ENCODE measurements at regions of chr22 and their contacts with region 1.

Region 1: GRCh38 chr22:38485783-38486182 is 17.9 kb downstream of the KDELR3 start:
- DNase-seq: no peak
- H3K4me3 ChIP-seq: no peak overlapping the region
- CTCF ChIP-seq: no peak

Region 2: GRCh38 chr22:38540701-38541100 is 54.9 kb after region 1 on chr22:
- CTCF ChIA-PET with region 1: no interaction called
- POLR2A ChIA-PET with region 1: no interaction called
- DNase-seq: no peak
- H3K4me3 ChIP-seq: no peak overlapping the region
- CTCF ChIP-seq: no peak

Region 3: DNA sequence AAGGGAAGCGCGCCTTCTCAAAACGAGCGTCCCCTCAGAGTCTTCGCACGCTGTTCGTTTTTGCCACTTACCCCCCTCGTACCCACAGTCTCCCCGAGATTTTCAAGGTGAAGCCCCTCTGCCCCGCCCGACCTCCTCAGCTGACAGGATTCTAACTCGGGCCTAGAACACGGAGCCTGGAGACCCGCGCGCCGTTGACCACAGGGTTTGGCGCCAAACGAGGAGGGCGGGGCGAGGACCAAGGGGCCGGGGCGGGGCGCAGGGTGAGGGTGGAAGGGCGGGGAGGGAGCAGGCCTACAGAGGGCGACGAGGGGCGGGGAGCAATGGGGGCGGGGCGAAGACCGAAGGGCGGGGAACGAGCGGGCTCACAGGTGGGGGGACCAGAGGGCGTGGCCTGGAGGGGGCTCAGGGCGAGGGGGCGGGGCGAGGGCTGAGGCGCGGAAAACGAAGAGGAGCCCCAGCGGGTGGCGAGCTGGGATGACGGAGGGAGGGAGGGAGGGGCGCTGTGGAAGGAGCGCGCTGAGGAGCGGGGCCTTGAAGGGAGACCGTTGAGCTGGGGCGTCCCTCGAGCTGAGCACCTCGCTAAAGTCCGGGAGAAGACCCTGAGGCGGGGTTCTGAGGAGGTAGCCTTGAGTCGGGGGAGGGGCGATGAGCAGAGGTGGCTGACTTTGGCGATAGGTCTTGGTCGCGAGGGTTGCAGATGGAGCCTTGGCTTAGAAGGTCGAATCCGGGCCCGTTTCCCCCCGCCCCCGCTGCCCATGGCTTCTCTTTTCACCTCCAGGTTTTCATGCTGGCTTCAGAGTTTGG is 84.4 kb after region 1 on chr22 and contains the start of gene DMC1:
- CTCF ChIA-PET with region 1: interaction called, 12 read pairs
- POLR2A ChIA-PET with region 1: no interaction called
- DNase-seq: no peak
- H3K4me3 ChIP-seq: peak within 1 kb of the TSS; percentile 75
- CTCF ChIP-seq: no peak

Measured in AG04449 (cell line).